Ovary (tissue), 10 donors: ENCODE measurements at regions of chr5 and their contacts with region 1.

Region 1: GRCh38 chr5:2047341-2047927 is 164.7 kb upstream of the IRX4 start:
- DNase-seq: no peak
- H3K4me3 ChIP-seq: no peak overlapping the region
- H3K27ac ChIP-seq: no peak overlapping the region
- H3K4me1 ChIP-seq: no peaks in the 10 kb centered on the region
- H3K27me3 ChIP-seq: no peaks in the 10 kb centered on the region
- CTCF ChIP-seq: no peak
- EP300 ChIP-seq: no peak
- POLR2A ChIP-seq: no peak

Region 2: GRCh38 chr5:1666812-1667588 is 380.4 kb before region 1 on chr5:
- intact Hi-C with region 1: loop called in 1 of 4 experiments (anchors 10 kb)
- DNase-seq: peak; percentile 44 to 83 (median 71)
- H3K4me3 ChIP-seq: no peak overlapping the region
- H3K27ac ChIP-seq: peak overlapping the region in 1 of 2 donors; percentile 36
- H3K4me1 ChIP-seq: peaks cover 7% of the 10 kb centered on the region
- H3K27me3 ChIP-seq: no peaks in the 10 kb centered on the region
- CTCF ChIP-seq: peak in 1 of 3 donors; percentile 42
- EP300 ChIP-seq: no peak
- POLR2A ChIP-seq: no peak

Region 3: DNA sequence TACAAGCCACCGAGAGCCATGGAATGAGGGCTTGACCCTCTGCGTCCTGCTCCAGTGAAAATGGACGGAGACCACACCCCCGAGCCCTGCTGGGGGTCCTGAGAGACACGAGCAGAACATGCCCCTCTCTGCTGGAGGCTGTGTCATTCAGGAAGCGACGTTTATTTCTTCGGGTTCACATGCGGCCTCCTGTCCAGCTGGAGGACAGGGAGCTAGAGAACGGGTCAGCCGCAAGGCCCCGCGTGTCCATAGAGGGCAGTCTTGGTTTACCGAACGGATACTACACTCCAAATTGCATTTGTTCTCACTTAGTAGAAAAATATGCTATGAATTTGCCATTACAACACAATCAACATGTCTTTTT is 283.9 kb before region 1 on chr5:
- intact Hi-C with region 1: loop called in 2 of 4 experiments (anchors 10 kb)
- DNase-seq: peak; percentile 30 to 67 (median 42)
- H3K4me3 ChIP-seq: no peak overlapping the region
- H3K27ac ChIP-seq: no peak overlapping the region
- H3K4me1 ChIP-seq: peaks cover 2% of the 10 kb centered on the region
- H3K27me3 ChIP-seq: no peaks in the 10 kb centered on the region
- CTCF ChIP-seq: peak in 1 of 3 donors; percentile 24
- EP300 ChIP-seq: no peak
- POLR2A ChIP-seq: no peak

Region 4: GRCh38 chr5:2075365-2075764 is 27.9 kb after region 1 on chr5:
- intact Hi-C with region 1: no loop called
- DNase-seq: no peak
- H3K4me3 ChIP-seq: no peak overlapping the region
- H3K27ac ChIP-seq: no peak overlapping the region
- H3K4me1 ChIP-seq: no peaks in the 10 kb centered on the region
- H3K27me3 ChIP-seq: no peaks in the 10 kb centered on the region
- CTCF ChIP-seq: no peak
- EP300 ChIP-seq: no peak
- POLR2A ChIP-seq: no peak

Region 5: GRCh38 chr5:3345195-3345594 is 1297.8 kb after region 1 on chr5:
- intact Hi-C with region 1: no loop called
- DNase-seq: no peak
- H3K4me3 ChIP-seq: no peak overlapping the region
- H3K27ac ChIP-seq: no peak overlapping the region
- H3K4me1 ChIP-seq: no peaks in the 10 kb centered on the region
- H3K27me3 ChIP-seq: no peaks in the 10 kb centered on the region
- CTCF ChIP-seq: no peak
- EP300 ChIP-seq: no peak
- POLR2A ChIP-seq: no peak